Transverse colon (tissue), 4 donors: ENCODE measurements at regions of chr19 and their contacts with region 1.

Region 1: DNA sequence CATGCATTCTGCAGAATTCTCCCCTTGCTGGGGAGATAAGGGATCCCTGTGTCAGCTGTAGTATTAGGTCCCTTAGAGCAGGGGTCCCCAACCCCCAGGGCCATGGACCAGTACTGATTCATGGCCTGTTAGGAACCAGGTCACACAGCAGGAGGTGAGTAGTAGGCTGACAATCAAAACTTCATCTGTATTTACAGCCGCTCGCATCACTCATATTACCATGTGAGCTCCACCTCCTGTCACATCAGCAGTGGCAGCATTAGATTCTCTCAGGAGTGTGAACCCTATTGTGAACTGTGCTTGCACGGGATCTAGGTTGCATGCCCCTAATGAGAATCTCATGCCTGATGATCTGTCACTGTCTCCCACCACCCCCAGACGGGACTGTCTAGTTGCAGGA is 37.9 kb downstream of the CPAMD8 start:
- DNase-seq: no peak
- H3K4me3 ChIP-seq: no peak overlapping the region
- H3K27ac ChIP-seq: no peak overlapping the region
- H3K4me1 ChIP-seq: no peaks in the 10 kb centered on the region
- H3K27me3 ChIP-seq: no peaks in the 10 kb centered on the region
- CTCF ChIP-seq: no peak
- EP300 ChIP-seq: no peak
- POLR2A ChIP-seq: no peak

Region 2: DNA sequence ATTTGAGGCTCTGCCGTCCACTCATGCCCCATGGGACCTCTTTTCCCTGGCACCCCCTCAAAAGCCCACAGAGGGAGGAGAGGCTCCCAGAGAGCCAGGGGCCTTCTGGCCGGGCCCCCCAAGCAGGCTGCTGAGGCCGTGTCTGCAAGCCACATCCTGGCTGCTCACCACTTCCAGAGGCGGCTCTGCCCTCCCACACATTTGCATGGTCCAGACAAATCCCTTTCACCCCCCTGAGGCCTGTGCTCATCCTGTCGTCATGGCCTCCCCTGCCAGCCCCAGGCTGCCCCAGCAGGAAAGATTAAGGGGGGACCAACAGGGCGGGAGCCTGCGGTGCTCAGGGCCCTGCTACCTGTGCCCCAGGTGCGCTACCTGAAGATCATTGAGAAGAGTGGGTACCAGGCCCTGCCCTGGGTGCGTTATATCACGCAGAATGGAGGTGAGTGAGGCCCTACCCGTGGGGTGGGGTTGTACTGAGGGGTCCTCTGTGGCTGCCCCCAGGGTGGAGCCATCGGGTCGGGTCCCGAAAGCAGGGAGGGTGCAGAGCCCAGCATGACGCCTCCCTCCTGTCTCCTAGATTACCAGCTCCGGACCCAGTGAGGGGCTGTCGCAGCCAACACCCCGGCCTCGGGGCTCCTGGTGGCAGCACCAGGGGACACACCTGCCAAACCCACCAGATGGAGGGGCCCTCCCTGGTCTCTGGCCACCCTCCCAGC is 754.7 kb before region 1 on chr19:
- in situ Hi-C with region 1: no loop called
- intact Hi-C with region 1: loop called (anchors 5 kb)
- DNase-seq: no peak
- H3K4me3 ChIP-seq: no peak overlapping the region
- H3K27ac ChIP-seq: no peak overlapping the region
- H3K4me1 ChIP-seq: no peaks in the 10 kb centered on the region
- H3K27me3 ChIP-seq: no peaks in the 10 kb centered on the region
- CTCF ChIP-seq: no peak
- EP300 ChIP-seq: no peak
- POLR2A ChIP-seq: no peak

Region 3: DNA sequence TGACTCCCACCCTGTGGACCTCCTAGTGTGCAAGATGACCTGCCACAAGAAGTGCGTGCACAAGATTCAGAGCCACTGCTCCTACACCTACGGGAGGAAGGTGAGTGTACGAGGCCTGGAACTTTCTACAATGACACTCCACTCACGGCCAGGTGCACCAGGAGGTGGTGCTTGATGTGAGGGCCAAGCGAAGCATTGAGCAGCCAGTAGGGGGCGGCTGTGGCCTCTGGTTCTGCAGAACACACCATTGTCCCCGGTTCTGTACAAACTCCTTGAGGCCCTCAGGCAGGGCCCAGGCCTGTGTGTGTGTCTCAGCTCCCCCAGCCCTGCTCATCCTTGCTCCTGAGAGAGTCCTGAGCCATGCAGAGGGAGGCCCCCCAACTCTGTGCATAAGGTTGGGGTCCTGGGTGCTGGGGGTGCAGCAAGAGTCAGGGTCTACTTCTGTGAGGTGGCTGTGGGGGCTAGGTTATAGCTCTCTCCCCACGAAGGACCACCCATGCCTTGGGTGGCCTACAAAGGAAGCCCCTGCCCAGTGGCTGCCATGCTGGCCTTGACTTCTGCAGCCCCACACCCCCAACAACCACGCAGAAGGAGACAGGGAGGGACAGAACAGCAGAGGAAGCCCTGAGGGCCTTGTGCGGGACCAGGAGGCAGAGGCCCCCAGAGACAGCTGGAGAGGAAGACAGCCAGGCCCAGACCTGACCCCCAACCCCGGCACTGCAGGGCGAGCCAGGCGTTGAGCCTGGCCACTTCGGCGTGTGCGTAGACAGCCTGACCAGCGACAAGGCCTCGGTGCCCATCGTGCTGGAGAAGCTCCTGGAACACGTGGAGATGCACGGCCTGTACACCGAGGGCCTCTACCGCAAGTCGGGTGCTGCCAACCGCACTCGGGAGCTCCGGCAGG is 216.8 kb after region 1 on chr19:
- in situ Hi-C with region 1: no loop called
- intact Hi-C with region 1: no loop called
- DNase-seq: peak; percentile 82
- H3K4me3 ChIP-seq: no peak overlapping the region
- H3K27ac ChIP-seq: no peak overlapping the region
- H3K4me1 ChIP-seq: no peaks in the 10 kb centered on the region
- H3K27me3 ChIP-seq: no peaks in the 10 kb centered on the region
- CTCF ChIP-seq: peak; percentile 63 to 82 (median 66)
- EP300 ChIP-seq: no peak
- POLR2A ChIP-seq: no peak